ENCODE measurements at regions of chr5 and their contacts with region 1.

Region 1: GRCh38 chr5:126707080-126707479 is 69.9 kb upstream of the LMNB1 start:
- DNase-seq: no peak
- ATAC-seq: no peak
- H3K4me3 ChIP-seq: no peak overlapping the region
- H3K27ac ChIP-seq: no peak overlapping the region
- H3K4me1 ChIP-seq: no peaks in the 10 kb centered on the region
- H3K27me3 ChIP-seq: no peaks in the 10 kb centered on the region
- CTCF ChIP-seq: no peak

Region 2: GRCh38 chr5:126531543-126532120 is 175.4 kb before region 1 on chr5:
- CTCF ChIA-PET with region 1: no interaction called
- POLR2A ChIA-PET with region 1: no interaction called
- in situ Hi-C with region 1: no loop called
- intact Hi-C with region 1: no loop called
- DNase-seq: no peak
- ATAC-seq: no peak; the same call in 1 of the 2 replicates
- H3K4me3 ChIP-seq: no peak overlapping the region
- H3K27ac ChIP-seq: peak overlapping the region; percentile 13; the same call in 1 of the 2 replicates
- H3K4me1 ChIP-seq: no peaks in the 10 kb centered on the region
- H3K27me3 ChIP-seq: no peaks in the 10 kb centered on the region
- CTCF ChIP-seq: no peak

Region 3: GRCh38 chr5:126692971-126693370 is 14.1 kb before region 1 on chr5:
- CTCF ChIA-PET with region 1: no interaction called
- POLR2A ChIA-PET with region 1: interaction called, 14 read pairs
- in situ Hi-C with region 1: no loop called
- intact Hi-C with region 1: no loop called
- DNase-seq: no peak
- ATAC-seq: no peak
- H3K4me3 ChIP-seq: no peak overlapping the region
- H3K27ac ChIP-seq: no peak overlapping the region
- H3K4me1 ChIP-seq: no peaks in the 10 kb centered on the region
- H3K27me3 ChIP-seq: no peaks in the 10 kb centered on the region
- CTCF ChIP-seq: no peak

Region 4: DNA sequence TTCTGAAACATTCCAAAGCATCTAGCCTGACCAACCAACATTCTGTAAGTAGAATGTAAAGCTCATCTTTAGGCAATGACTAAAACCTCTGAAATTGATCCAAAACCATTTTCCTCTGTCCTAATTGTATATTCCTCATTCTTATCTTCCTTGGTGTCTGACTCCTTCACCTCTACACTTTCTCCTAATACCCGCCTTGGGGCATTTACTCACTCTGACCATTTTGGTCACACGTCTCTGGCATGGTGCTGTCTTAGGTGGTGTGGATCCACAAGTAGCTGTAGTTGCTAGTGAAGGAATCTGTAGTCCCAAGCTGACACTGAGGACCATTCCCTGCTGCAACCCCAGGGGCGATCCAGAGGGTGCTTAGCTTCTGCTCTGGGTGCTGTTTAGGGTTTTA is 29.1 kb after region 1 on chr5:
- CTCF ChIA-PET with region 1: no interaction called
- POLR2A ChIA-PET with region 1: no interaction called
- in situ Hi-C with region 1: no loop called
- intact Hi-C with region 1: no loop called
- DNase-seq: no peak
- ATAC-seq: no peak
- H3K4me3 ChIP-seq: no peak overlapping the region
- H3K27ac ChIP-seq: no peak overlapping the region
- H3K4me1 ChIP-seq: no peaks in the 10 kb centered on the region
- H3K27me3 ChIP-seq: no peaks in the 10 kb centered on the region; the same call in 1 of the 2 replicates
- CTCF ChIP-seq: no peak